ENCODE measurements at regions of chr6 and their contacts with region 1.

Region 1: DNA sequence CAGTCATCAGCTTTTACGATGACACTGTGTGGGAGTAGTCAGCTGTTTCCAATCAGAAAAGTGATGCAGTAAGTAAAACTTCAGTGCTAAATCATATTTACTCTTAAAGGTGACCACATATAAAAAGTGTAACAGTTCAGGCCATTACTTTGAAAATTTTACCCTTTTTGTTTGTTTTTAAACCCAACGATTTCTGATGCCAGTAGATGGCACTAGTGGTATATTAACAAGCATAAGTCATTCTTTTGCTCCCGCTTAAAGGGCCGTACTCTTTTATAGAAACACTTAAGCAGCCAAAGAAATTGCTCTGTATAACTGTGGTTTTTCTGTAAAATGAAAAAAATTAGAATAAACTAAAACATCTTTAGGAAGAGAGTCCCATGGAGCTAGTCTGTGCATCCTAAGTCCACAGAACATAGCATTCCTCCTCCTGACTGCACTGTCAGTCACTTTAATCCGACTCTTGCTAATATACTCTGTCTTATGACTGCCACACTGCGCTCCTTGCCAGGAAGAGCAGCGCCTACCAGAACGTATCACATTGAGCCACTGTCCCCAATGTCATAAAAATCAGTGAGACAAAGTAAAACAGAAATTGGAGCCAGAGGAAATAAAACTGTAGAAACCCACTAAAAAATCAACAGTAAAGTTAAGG is 25.0 kb downstream of the HEBP2 start:
- DNase-seq: peak in 1 of 3 donors; percentile 66
- ATAC-seq: peak; percentile 62
- H3K4me3 ChIP-seq: no peak overlapping the region
- H3K4me1 ChIP-seq: peaks cover 3% of the 10 kb centered on the region
- CTCF ChIP-seq: no peak

Region 2: DNA sequence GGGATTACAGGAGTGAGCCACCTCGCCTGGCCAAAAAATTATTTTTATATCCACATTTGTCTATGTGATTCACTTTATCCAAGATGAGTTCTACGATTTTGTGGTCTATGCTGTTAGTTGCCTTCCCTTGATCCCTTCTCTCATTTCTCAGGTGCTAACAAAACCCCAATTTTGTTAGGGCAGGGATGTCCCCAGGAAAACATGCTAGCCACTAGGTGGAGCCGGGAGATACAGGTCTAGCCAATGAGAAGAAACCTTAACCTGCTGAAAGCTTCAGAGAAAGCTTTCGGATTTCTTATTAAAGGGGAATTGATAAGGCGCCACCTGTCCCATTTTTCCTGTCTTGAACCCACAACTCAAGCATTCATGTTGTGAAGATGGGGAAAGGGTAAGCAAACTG is 767.5 kb before region 1 on chr6:
- intact Hi-C with region 1: no loop called
- DNase-seq: peak in 1 of 3 donors; percentile 63
- ATAC-seq: no peak
- H3K4me3 ChIP-seq: no peak overlapping the region
- H3K4me1 ChIP-seq: peaks cover 6% of the 10 kb centered on the region
- CTCF ChIP-seq: peak; percentile 21

Region 3: GRCh38 chr6:138372711-138373463 is 56.2 kb before region 1 on chr6:
- intact Hi-C with region 1: no loop called
- DNase-seq: no peak
- ATAC-seq: no peak
- H3K4me3 ChIP-seq: no peak overlapping the region
- H3K4me1 ChIP-seq: no peaks in the 10 kb centered on the region
- CTCF ChIP-seq: no peak

Region 4: GRCh38 chr6:138509371-138509770 is 80.3 kb after region 1 on chr6:
- intact Hi-C with region 1: loop called (anchors 5 to 10 kb)
- DNase-seq: peak in 2 of 3 donors; percentile 57 to 89
- ATAC-seq: peak; percentile 59
- H3K4me3 ChIP-seq: no peak overlapping the region
- H3K4me1 ChIP-seq: peaks cover 33% of the 10 kb centered on the region
- CTCF ChIP-seq: peak; percentile 32

Region 5: DNA sequence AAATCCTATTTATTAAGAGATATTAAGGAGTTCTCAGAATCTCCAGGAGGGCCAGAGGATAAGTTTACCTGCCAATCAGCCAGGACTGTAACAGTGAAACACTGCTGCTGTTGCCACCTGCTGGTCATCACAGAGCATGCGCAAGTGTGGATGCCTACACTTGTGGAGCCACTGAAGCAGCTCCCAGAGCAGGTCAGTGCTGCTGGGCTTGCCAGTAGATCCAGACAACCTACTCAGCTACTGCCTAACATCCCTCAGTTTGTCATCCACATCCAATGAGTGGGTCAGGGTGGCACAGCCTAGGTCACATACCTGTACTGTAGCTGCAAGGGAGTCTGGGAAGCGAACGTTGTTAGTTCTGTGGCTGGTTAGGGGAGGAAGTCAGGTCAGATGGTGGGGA is 88.6 kb after region 1 on chr6:
- intact Hi-C with region 1: loop called in 1 of 2 experiments (anchors 10 kb)
- DNase-seq: peak in 2 of 3 donors; percentile 67 to 75
- ATAC-seq: peak; percentile 94
- H3K4me3 ChIP-seq: no peak overlapping the region
- H3K4me1 ChIP-seq: no peaks in the 10 kb centered on the region
- CTCF ChIP-seq: peak; percentile 66

Region 6: GRCh38 chr6:138588805-138589434 is 159.8 kb after region 1 on chr6:
- intact Hi-C with region 1: loop called (anchors 5 to 10 kb)
- DNase-seq: peak in 1 of 3 donors; percentile 59
- ATAC-seq: peak; percentile 64
- H3K4me3 ChIP-seq: no peak overlapping the region
- H3K4me1 ChIP-seq: peaks cover 13% of the 10 kb centered on the region
- CTCF ChIP-seq: peak; percentile 80

Measured in mucosa of descending colon (tissue), 3 donors.